Ascending aorta (tissue), 2 donors: ENCODE measurements at regions of chr19 and their contacts with region 1.

Region 1: DNA sequence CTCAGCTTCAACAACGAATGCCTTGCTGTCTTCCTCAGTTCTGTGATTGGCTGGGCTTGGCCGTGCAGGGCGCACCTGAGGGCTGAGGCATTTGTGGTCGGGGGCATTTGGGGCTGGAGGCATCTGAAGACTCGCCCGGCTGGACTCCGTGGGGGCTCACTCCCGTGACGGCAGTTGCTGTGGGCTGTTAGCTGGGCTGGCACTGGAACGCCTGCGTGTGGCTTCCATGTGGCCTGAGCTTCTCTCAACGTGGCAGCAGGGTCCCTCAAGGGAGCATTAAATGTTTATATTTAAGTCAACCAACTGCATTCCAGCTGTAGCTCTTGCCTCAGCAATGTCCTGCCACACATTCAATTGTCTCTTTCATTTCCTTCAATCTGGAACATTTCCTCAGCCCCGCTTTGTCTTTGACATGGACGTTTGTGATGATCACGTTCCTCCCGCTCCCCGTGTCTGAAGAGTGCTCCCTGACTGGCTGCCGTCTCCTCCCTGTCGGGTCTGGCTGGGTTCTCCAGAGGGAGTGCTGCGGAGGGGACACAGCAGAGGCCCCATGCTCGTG is 21.0 kb downstream of the CCDC8 start:
- DNase-seq: no peak
- H3K4me3 ChIP-seq: peak overlapping the region in 1 of 2 donors; percentile 17
- H3K27ac ChIP-seq: peak overlapping the region; percentile 52 to 66
- H3K4me1 ChIP-seq: peaks cover 5 to 24% of the 10 kb centered on the region in 2 donors
- H3K27me3 ChIP-seq: no peaks in the 10 kb centered on the region
- CTCF ChIP-seq: no peak

Region 2: DNA sequence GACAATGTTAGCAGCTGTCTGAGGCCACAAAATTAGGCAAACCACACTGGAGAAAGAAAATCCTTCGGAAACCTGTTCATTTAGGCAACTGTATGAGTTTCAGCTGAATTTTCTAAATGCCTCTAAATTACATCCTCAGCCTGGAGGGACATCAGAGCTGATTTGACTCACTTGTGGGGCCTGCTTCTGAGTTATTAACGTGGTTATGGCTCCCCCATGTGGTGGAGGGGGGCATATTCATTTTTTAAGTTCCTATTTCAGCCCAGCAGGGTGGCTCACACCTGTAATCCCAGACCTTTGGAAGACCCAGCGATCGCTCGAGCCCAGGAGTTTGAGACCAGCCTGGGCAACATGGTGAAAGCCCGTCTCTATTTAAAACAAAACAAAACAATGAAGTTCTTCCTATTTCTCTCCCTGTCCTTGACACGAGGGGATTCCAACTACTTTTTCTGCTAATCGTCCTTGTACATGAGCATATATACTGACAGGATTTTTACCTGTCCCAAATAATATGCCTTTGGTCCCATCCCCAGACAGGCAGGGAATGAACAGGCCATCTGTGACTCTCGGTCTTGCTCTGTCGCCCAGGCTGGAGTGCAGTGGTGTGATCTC is 127.0 kb before region 1 on chr19:
- intact Hi-C with region 1: no loop called
- DNase-seq: peak in 1 of 2 donors; percentile 76
- H3K4me3 ChIP-seq: no peak overlapping the region
- H3K27ac ChIP-seq: no peak overlapping the region
- H3K4me1 ChIP-seq: no peaks in the 10 kb centered on the region
- H3K27me3 ChIP-seq: no peaks in the 10 kb centered on the region
- CTCF ChIP-seq: peak; percentile 84 to 90 (median 88)

Region 3: DNA sequence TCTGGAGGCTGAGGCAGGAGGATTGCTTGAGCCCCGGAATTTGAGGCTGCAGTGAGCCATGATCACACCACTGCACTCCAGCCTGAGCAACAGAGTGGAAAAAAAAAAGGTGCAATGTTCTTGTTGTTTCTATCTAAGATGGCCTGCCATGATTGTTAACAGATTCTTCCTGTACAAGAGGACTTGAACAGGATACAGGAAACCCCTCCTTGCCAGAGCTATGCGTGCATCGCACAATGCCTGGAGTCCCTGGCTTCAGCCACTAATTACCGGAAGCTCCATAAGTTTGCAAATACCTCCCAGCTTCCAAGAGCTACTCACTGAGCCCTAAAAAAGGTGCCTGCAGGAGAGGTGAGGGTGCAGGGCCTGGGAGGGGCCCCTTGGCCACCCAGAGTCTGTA is 108.6 kb before region 1 on chr19:
- intact Hi-C with region 1: loop called (anchors 5 kb)
- DNase-seq: no peak
- H3K4me3 ChIP-seq: no peak overlapping the region
- H3K27ac ChIP-seq: no peak overlapping the region
- H3K4me1 ChIP-seq: no peaks in the 10 kb centered on the region
- H3K27me3 ChIP-seq: no peaks in the 10 kb centered on the region
- CTCF ChIP-seq: no peak

Region 4: DNA sequence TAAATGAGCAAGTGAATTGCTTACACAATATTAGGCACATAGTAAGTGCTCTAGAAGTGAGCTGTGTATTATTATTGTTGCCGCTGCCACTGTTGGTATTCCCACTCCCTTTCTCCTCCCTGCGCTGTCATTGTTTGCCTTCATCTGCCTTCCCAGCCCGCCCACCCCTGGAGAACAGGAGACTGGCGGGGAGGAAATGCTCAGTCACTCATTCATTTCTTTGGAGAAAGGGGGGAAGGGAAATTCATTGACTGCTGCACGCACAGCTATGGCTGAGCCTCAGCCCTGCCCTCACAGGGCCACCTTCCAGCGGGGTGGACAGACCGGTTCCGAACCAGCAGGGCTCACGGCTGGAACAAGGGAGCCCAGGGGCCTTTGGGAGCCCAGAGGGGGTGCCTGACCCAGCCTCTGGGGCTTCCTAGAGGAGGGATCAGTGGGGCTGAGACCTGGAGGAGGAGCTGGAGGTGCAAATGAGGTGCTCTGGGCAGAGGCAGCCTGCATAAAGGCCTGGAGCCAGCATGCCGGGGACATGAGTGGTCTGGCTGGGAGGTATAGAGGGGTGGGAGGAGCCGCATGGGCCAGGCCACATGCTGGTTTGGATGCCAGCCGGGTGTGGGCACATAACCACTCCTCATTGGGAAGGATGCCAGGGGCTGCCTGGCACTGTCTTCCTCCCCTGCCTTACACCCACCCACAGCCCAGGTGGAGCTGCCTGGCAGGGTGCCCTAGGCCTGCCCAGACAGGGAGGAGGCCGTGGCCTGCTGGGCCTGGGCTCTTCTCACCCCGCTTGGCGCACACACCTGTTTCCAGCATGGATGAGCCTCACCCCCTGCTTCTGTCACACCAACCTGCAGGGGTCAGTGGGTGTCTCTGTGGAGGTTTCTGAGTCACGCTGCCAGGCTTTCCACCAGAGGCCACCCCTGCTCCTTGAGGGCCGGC is 18.6 kb before region 1 on chr19:
- intact Hi-C with region 1: no loop called
- DNase-seq: peak; percentile 51 to 84
- H3K4me3 ChIP-seq: peak overlapping the region in 1 of 2 donors; percentile 35
- H3K27ac ChIP-seq: peak overlapping the region; percentile 85 to 90
- H3K4me1 ChIP-seq: peaks cover 10 to 32% of the 10 kb centered on the region in 2 donors
- H3K27me3 ChIP-seq: no peaks in the 10 kb centered on the region
- CTCF ChIP-seq: no peak

Region 5: DNA sequence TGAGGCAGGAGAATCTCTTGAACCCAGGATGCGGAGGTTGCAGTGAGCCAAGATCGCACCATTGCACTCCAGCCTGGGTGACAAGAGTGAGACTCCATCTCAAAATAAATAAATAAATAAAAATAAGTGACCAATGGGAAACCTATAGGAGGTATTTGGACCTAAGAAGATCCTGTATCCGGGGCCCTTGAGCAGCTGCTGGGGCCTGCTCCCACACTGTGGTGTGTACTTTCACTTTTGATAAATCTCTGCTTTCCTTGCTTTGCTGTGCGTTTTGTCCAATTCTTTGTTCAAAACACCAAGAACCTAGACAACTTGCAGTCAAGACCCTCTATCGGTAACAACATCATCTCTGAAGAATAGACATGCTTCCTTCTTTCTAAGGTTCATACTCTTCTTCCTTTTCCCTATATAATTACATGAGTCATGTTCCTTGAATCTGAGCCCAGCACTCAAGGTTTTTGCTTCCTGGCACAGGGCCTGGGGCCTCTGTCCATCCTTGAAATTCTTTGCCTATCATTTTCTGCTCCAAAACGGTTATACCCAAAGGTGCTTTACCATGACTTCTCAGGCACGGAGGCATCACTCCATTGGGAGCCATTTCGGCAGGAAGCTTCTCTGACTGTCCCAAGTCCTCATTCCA is 50.6 kb after region 1 on chr19:
- intact Hi-C with region 1: no loop called
- DNase-seq: no peak
- H3K4me3 ChIP-seq: peak overlapping the region in 1 of 2 donors; percentile 23
- H3K27ac ChIP-seq: peak overlapping the region; percentile 2 to 65
- H3K4me1 ChIP-seq: peaks cover 0 to 20% of the 10 kb centered on the region in 2 donors
- H3K27me3 ChIP-seq: no peaks in the 10 kb centered on the region
- CTCF ChIP-seq: no peak

Region 6: DNA sequence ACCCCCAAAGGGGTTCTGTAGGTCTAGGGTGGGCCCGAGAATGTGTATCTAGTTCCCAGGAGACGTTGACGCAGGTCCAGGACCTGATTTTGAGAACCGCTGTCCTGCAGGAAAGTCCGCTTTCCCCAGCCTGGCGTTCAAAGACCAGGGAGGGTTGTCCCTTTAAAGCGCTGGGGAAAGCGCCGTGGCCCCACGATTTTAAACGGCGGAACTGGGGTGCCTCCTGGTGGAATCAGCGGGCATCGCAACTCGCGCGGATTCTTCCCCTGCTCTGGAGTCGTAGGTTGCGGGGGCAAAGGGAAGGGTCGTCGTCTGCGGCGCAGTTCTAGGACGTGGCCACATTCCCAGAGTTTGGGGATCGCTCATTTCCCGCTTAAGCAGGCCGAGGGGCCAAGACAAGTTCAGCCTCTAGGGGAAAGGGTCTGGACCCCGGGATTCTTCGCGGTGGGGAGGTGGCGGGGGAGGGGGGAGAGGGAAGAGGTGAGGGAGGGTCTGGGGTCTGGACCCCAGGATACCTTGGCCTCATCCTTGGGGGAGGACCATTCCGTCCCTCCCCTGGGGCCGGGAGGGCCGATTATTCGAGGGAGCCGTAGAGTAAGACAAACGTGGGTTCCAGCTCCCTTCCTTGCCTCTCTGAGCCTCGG is 95.6 kb after region 1 on chr19:
- intact Hi-C with region 1: loop called (anchors 1 kb)
- DNase-seq: peak in 1 of 2 donors; percentile 90
- H3K4me3 ChIP-seq: peak overlapping the region; percentile 56 to 67
- H3K27ac ChIP-seq: peak overlapping the region in 1 of 2 donors; percentile 51
- H3K4me1 ChIP-seq: peaks cover 11 to 19% of the 10 kb centered on the region in 2 donors
- H3K27me3 ChIP-seq: no peaks in the 10 kb centered on the region
- CTCF ChIP-seq: peak; percentile 93 to 99 (median 99)

Region 7: DNA sequence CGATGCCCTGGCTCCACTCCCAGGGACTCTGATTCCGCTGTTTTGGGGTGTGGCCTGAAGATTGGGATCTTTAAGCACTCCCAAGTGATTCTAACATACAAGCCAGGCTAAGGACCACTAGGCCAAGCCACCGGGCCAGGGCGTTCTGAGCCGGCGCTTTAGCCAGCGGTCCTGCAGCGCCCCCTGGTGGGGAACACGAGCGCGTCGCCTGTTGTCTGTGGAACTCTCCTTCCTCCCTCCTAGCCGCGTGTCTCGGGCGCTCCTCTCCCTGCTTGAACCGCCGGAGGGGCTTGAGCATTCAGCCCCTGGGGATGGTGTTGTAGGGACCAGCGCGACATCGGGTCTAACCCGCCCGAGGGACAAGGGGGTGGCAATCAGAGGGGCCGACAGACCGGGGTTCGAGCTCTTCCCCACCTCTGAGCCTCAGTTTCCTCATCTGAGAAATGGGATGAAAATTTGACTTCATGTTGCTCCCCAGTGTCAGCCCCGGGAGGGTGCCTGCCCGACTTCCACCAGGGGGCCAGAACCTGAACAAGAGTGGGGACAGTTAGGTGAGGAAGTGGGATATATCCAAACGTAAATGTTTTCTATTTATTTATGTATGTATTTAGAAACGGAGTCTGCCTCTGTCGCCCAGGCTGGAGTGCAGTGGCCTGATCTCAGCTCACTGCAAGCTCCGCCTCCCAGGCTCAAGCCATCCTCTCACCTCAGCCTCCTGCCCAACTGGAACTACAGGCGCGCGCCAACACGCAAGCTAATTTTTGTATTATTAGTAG is 121.3 kb after region 1 on chr19:
- intact Hi-C with region 1: loop called (anchors 1 kb)
- DNase-seq: peak in 1 of 2 donors; percentile 85
- H3K4me3 ChIP-seq: peak overlapping the region in 1 of 2 donors; percentile 13
- H3K27ac ChIP-seq: peak overlapping the region in 1 of 2 donors; percentile 5
- H3K4me1 ChIP-seq: peaks cover 3 to 14% of the 10 kb centered on the region in 2 donors
- H3K27me3 ChIP-seq: no peaks in the 10 kb centered on the region
- CTCF ChIP-seq: peak; percentile 97 to 99 (median 98)

Region 8: DNA sequence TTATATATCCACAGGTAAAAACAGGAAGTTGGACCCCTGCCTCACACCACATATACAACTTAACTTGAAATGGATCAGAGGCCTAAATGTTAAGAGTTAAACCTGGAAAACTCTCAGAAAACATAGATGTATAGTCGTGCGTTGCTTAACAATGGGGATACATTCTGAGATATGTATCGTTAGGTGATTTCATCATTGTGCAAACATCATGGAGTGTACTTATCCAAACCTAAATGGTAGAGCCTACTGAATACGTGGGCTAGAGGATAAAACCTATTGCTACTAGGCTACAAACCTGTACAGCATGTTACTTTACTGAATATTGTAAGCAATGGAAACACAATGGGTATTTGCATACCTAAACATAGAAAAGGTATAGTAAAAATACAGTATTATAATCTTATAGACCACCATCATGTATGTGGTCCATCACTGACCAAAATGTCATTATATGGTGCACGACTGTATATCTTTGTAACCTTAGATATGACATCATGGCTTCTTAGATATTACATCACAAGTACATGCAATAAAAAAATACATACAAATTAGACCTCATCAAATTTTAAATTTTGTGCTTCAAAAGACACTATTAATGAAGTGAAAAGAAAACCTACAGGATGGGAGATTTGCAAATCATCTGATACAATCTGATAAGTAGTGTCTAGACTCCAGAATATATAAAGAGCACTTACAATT is 194.1 kb after region 1 on chr19:
- intact Hi-C with region 1: no loop called
- DNase-seq: no peak
- H3K4me3 ChIP-seq: no peak overlapping the region
- H3K27ac ChIP-seq: no peak overlapping the region
- H3K4me1 ChIP-seq: peaks cover 0 to 4% of the 10 kb centered on the region in 2 donors
- H3K27me3 ChIP-seq: no peaks in the 10 kb centered on the region
- CTCF ChIP-seq: no peak

Region 9: DNA sequence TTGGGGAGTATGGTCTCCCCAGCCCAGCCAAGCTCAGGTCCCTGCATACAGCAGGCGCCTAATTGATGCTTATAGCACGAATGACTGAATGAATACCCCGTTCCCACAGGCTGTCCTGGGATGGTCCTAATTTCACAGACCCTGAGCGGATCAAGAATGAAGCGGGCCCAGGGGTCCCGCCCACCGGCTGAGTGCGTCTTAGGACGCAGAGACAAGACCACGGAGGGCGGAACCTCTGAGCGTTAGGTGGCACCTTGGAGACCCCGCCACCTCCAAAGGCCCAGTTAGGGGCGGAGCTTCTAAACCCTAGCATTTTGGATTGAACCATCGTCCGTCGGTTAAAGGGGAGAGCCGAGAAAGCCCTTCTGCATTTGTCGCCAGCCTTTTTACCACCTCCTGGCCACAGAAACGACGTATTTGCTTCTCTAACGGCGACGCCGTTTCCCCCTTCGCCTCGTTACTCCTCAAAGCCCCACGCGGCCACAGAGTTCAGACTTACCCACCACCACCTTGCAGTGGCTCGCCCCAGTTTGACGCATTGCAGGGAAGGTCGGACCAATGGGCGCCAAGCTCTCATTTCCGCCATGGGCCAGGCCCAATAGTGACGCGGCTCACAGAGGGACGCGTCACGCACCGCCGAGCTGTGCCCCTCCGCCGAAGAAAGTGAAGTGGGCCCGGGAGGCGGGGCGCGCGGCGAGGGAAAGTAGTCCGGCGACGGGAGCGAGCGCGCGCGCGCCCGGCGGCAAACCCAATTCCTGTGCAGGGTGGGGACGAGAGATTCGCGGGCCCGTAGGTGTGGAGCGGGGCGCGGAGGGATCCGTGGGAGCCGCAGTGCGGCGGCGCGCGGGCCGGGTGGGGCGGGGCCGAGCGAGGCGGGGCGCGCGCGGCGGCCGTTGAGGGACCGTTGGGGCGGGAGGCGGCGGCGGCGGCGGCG is 208.3 kb after region 1 on chr19:
- intact Hi-C with region 1: loop called (anchors 10 kb)
- DNase-seq: peak; percentile 85 to 99
- H3K4me3 ChIP-seq: peak overlapping the region; percentile 88
- H3K27ac ChIP-seq: peak overlapping the region; percentile 93 to 98
- H3K4me1 ChIP-seq: peaks cover 9 to 31% of the 10 kb centered on the region in 2 donors
- H3K27me3 ChIP-seq: no peaks in the 10 kb centered on the region
- CTCF ChIP-seq: peak in 1 of 3 experiments; percentile 24